PC-3 (cell line): ENCODE measurements at regions of chr3 and their contacts with region 1.

Region 1: GRCh38 chr3:168467115-168467714 is 371.5 kb upstream of the GOLIM4 start:
- DNase-seq: peak; percentile 64
- ATAC-seq: peak; percentile 98
- H3K4me3 ChIP-seq: no peak overlapping the region
- H3K27ac ChIP-seq: no peak overlapping the region
- H3K4me1 ChIP-seq: no peaks in the 10 kb centered on the region
- H3K27me3 ChIP-seq: no peaks in the 10 kb centered on the region
- CTCF ChIP-seq: peak; percentile 79

Region 2: DNA sequence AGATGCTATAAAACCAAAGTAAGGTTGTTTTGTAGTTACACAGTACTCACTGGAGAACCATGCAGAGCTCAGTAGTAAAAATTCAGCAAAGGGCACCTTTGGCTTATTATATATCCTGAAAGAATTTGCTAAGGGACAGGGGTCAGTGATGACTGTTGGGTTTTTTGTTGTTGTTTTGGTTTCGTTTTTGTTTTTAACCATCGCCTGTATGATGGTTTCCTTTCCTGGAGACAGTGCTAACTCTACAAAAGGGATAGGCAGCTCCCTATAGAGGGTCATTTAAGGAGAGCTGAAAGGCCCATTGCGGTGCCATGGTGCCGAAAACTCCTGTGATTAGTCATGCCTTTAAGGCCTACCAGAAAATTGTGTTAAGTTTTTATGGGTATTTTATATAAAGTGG is 253.3 kb before region 1 on chr3:
- CTCF ChIA-PET with region 1: no interaction called
- POLR2A ChIA-PET with region 1: no interaction called
- intact Hi-C with region 1: loop called (anchors 1 kb)
- DNase-seq: no peak
- ATAC-seq: no peak
- H3K4me3 ChIP-seq: no peak overlapping the region
- H3K27ac ChIP-seq: no peak overlapping the region
- H3K4me1 ChIP-seq: no peaks in the 10 kb centered on the region
- H3K27me3 ChIP-seq: no peaks in the 10 kb centered on the region
- CTCF ChIP-seq: no peak

Region 3: DNA sequence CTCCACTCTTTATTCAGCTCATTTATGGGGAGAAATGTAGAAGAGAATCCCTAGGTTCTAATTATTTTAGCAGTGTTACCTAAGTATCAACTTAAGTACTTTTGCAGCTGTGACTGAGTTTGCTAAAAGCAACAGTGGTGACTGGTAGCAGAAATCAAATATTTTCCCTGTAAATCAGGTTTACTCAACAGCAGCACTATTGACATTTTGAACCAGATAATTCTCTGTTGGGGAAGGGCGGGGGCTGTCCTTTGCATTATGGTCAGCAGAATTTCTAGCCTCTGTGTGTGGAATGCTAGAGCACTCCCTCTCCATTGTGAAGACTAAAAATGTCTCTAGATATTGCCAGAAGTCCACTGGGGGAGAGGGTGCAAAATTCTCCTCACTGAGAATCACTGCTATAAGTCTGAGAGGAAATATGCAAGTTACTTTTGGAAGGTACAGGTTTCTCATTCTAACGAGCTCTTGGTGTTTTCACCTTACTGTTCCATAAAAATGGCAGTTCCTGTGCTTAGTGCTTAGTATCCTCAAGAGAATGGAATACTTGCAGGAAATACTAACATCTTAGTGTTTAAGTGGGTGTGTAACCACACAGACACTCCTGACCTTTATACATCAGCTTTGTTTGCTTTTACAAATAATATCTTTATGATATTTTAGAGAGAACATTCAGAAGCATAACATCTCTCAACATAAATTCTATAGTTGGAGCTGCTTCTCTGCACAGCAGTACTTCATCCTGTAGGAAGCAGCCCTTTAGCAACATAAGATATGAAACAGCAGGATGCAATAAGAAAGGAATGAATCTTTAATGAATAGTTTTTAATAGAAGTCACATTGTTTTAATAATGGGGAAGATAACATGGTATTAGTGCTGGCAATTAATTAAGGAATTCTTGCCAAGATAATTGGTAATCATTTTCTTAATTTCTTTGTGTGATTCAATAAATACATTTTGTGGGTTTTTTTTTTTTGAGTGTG is 125.0 kb before region 1 on chr3:
- CTCF ChIA-PET with region 1: no interaction called
- POLR2A ChIA-PET with region 1: no interaction called
- intact Hi-C with region 1: loop called (anchors 1 kb)
- DNase-seq: peak; percentile 61
- ATAC-seq: peak; percentile 77
- H3K4me3 ChIP-seq: peak overlapping the region; percentile 29
- H3K27ac ChIP-seq: peak overlapping the region; percentile 48
- H3K4me1 ChIP-seq: peaks cover 38% of the 10 kb centered on the region
- H3K27me3 ChIP-seq: no peaks in the 10 kb centered on the region
- CTCF ChIP-seq: no peak

Region 4: DNA sequence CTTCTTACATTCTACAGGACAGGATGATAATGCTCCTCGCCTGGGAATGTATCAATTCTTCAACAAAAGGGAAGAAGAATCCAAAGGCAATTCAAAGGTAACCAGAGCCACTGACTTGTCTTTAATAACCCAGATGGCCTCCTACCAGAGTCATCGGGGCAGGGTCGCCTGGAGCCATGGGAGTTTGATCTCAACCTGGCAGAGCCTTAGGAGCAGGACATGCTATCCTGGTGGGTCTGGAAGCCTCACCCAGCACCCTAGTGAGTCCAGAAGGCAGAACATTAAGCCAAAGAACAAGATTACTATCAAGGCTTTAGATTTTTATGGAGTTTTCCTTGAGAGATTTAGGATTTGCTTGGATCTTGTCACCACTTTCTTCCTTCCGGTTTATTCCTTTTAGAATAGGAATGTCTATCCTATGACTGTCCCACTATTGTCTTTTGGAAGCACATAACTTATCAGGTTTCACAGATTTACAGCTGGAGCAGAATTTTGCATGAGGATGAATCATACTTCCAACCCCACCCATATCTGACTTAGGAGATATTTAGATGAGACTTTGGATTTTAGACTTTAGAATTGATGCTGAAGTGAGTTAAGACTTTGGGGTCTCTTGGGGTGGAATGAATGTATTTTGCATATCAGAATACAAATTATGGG is 41.1 kb before region 1 on chr3:
- CTCF ChIA-PET with region 1: no interaction called
- POLR2A ChIA-PET with region 1: no interaction called
- intact Hi-C with region 1: loop called (anchors 2 kb)
- DNase-seq: peak; percentile 89
- ATAC-seq: peak; percentile 81
- H3K4me3 ChIP-seq: no peak overlapping the region
- H3K27ac ChIP-seq: peak overlapping the region; percentile 80
- H3K4me1 ChIP-seq: peaks cover 37% of the 10 kb centered on the region
- H3K27me3 ChIP-seq: no peaks in the 10 kb centered on the region
- CTCF ChIP-seq: no peak

Region 5: DNA sequence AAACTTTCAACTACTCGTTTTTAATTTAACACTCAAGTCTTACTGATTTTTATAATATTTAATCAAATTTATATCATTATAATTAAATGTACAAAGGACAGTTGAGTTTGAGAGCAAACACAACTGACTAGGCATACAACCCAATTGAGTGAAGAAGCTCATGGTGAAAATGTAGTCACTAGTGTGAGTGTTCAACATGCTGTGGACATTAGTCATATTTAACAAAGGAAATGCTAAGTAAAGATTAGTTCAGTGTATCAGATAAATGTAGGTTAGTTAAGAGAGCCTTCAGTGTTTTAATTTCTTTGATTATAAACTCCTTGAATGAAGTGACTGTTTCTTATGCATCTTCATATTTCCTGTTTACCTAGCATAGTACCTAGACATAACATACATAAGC is 72.7 kb after region 1 on chr3:
- CTCF ChIA-PET with region 1: no interaction called
- POLR2A ChIA-PET with region 1: no interaction called
- intact Hi-C with region 1: loop called (anchors 2 kb)
- DNase-seq: peak; percentile 32
- ATAC-seq: peak; percentile 95
- H3K4me3 ChIP-seq: no peak overlapping the region
- H3K27ac ChIP-seq: no peak overlapping the region
- H3K4me1 ChIP-seq: no peaks in the 10 kb centered on the region
- H3K27me3 ChIP-seq: no peaks in the 10 kb centered on the region
- CTCF ChIP-seq: no peak